Cardiac septum (tissue), 1 donor: ENCODE measurements at regions of chr7 and their contacts with region 1.

Region 1: GRCh38 chr7:25565949-25566348 is 337.7 kb upstream of the NPVF start:
- DNase-seq: no peak

Region 2: DNA sequence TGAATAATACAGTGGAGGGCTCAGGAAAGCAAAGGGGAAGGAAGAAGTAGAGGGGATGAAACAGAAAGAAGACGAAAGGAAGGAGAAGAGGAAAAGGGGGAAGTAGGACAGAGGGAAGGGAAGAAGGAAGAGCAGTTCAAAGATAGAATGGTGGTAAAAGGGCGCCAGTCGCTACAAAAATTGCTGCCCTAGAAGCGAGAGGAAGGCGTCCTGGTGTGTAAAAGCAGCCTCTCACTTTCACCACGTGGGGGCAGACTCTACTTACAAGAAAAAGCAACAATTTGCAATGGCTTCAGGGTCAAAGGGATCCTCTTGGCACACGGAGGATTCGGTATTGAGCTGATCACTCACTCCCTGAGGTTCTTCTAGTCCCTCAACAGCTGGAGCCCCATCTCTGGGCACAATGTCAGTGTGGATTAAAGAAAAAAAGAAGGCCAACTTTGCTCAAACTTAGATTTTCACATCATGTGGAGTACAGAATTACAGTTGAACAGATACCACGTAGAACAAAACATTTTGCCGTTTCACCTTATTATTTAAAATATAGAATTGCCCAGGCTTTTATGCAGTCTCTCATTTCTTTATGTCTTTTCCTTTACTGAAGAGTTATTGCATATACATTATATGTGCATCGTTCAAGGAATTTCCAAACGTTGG is 306.2 kb before region 1 on chr7:
- intact Hi-C with region 1: loop called (anchors 2 kb)
- DNase-seq: no peak

Region 3: DNA sequence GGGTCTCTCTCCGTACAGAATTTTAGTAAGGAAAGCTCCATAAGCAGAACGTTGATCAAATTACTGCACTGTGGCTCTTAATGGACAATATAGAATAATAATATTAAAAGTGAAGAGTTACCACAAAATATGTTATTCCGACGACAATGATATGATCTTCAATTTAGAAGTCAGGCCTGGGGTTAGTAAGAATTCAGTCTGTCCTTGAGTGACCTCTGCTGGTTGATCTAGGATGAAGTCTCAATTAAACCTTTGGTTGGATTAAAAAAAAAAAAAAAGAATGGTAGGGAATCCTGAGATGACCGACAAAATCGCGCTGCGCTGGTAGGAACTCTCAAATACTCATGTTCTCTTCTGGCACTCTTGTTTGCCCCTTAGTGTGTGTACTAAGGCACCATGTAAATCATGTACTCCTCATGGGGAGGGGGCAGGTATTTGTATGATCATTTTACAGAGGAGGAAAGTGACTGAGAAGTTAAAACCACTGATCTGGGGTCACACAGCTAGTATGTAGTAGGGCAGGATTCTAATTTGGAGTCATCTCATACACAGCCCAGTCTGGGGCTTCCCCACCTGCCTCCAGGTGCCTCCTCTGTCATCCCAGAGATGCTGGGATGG is 176.4 kb before region 1 on chr7:
- intact Hi-C with region 1: loop called (anchors 1 kb)
- DNase-seq: no peak

Region 4: GRCh38 chr7:25456467-25457171 is 109.3 kb before region 1 on chr7:
- intact Hi-C with region 1: loop called (anchors 10 kb)
- DNase-seq: no peak

Region 5: GRCh38 chr7:25675789-25676474 is 110.0 kb after region 1 on chr7:
- intact Hi-C with region 1: no loop called
- DNase-seq: no peak